Activated T-helper 2 cell treated with anti-CD3 and anti-CD28 coated beads, Interferon-gamma antibody, Interleukin-2, Interleukin-4, amounts not matched to agents 10 μg/mL and 5 μg/mL and 100 μg/mL, durations not matched to agents 14 hours and 24 hours and 36 hours (primary cell): ENCODE measurements at regions of chr1 and their contacts with region 1.

Region 1: DNA sequence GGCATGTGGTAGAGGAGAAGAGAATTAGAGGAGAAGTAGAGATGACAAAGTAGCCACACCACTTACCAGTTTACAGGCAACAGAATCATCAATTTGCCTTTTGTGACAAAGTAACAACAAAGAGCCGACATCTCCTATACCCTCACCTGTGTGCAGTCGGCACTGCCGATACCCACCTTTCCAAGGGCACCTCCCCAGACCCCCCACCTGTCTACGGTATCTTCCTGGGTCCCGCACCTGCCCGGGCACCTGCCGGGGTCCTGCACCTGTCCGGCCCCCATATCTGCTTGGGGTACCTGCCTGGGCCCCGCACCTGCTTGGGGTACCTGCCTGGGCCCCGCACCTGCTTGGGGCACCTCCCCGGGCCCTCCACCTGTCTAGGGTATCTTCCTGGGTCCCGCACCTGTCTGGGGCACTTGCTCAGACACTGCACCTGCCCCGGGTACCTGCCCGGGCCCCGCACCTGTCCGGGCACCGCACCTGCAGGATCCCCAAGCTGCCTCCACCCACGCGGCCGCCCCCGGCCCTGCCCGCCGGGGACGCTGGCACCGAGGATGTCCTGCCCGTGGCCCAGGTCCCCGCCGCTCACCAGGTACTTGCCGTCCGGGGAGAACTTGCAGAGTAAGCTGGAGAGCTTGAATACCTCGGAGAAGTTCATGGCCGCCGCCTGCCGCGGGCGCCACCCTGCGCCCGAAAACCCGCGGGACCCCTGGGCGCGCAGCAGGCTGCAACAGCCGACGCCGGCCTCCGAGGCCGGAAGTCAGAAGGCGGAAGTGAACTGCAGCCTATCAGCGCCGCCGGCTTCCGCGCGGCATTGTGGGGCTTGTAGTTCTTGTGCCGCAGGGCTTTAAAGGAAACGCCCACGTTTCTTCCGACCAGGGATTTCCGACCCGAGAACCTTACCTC is at the start of gene WRAP73:
- DNase-seq: peak; percentile 84
- H3K4me3 Mint-ChIP-seq: peak within 1 kb of the TSS; percentile 80
- H3K27ac Mint-ChIP-seq: no peak within 1 kb of the TSS
- H3K4me1 Mint-ChIP-seq: peaks cover 20% of the 10 kb centered on the region
- H3K27me3 Mint-ChIP-seq: peaks cover 23% of the 10 kb centered on the region
- total RNA-seq, gene WRAP73: 38.7 and 42.2 TPM in 2 replicates

Region 2: GRCh38 chr1:3627515-3628253 is 21.9 kb before region 1 on chr1:
- intact Hi-C with region 1: loop called (anchors 2 kb)
- DNase-seq: no peak
- H3K4me3 Mint-ChIP-seq: no peak overlapping the region
- H3K27ac Mint-ChIP-seq: no peak overlapping the region
- H3K4me1 Mint-ChIP-seq: peaks cover 10% of the 10 kb centered on the region
- H3K27me3 Mint-ChIP-seq: no peaks in the 10 kb centered on the region

Region 3: DNA sequence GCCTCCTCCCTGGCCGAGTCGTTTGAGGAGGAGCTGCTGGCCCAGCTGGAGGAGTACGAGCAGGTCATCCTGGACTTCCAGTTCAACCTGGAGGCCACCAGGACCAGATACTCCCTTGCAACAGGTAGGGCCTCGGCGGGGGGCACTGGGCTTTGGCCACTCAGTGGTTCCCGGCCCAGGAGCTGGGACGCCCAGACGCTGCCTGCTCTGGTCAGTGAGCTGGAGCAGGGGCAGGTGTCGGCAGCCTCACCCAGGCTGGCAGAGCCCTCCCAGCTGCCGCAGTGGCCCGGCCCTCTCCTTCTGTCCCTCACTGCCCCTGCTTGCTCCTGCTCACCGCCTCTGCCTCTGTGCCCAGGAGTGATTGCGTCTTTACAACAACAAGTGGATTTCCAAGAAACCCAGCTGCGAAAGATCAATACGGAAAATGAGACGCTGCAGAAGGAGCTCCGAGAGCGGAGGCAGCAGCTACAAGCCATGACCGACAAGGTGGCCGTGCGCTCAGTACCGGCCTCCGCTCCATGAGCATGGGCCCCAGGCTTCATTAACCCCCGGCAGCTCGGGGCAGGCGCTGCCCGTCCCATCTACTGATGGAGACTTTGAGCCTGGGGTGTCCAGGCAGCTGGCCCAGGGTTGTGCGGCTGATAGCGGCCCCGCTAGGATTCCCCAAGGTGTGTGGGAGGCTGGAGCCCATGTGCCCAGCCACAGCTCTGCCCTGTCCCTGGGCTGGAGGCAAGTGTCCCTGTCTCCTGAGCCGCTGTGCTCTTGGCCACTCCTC is 113.9 kb after region 1 on chr1:
- intact Hi-C with region 1: no loop called
- DNase-seq: no peak
- H3K4me3 Mint-ChIP-seq: no peak overlapping the region
- H3K27ac Mint-ChIP-seq: no peak overlapping the region
- H3K4me1 Mint-ChIP-seq: no peaks in the 10 kb centered on the region
- H3K27me3 Mint-ChIP-seq: peaks cover 3% of the 10 kb centered on the region

Region 4: DNA sequence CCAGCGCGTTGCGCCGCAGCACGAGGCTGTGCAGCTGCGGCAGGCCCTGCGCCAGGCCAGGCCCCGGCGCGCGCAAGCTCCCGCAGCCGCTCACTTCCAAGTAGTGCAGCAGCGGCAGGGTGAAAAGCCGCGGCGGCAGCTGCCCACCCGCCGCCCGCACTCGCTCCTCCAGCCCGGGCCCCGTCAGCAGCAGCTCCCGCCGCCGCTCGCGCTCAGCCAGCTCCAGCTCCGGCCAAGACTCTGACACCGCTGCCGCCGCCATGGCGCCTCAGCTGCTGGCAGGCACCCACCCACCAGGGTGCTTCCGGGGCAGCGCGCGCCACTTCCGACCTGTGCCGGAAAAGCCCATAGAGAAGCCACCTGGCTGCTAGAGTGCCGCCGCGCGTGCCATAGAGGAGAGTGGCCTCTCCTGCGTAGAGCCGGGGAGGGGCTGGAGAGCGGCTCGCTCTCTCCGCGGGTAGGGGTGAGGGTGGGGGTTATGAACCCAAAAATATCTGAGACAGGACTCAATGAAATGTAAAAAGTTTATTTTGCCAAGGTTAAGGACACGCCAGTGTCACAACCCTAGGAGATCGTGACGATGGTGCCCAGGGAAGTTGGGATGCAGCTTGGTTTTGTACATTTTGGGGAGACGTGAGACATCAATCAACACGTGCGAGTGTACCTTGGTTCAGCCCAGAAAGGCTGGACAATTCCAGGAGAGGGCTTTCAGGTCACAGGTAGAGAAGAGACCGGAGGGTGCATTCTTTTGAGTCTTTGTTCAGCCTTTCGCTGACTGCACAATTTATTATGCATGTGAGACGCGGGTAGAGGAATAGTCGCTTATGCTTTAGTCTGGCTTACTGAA is 146.8 kb after region 1 on chr1 and contains the start of gene LRRC47:
- intact Hi-C with region 1: loop called (anchors 10 kb)
- DNase-seq: peak; percentile 92
- H3K4me3 Mint-ChIP-seq: peak within 1 kb of the TSS; percentile 94
- H3K27ac Mint-ChIP-seq: peak within 1 kb of the TSS; percentile 78
- H3K4me1 Mint-ChIP-seq: peaks cover 26% of the 10 kb centered on the region
- H3K27me3 Mint-ChIP-seq: no peaks in the 10 kb centered on the region
- total RNA-seq, gene LRRC47: 40.4 and 41.3 TPM in 2 replicates

Region 5: GRCh38 chr1:3856908-3857790 is 207.6 kb after region 1 on chr1 and contains the starts of genes CEP104 and DFFB:
- intact Hi-C with region 1: loop called (anchors 5 kb)
- DNase-seq: peak; percentile 95
- H3K4me3 Mint-ChIP-seq: peak within 1 kb of the TSS; percentile 97
- H3K27ac Mint-ChIP-seq: peak within 1 kb of the TSS; percentile 81
- H3K4me1 Mint-ChIP-seq: peaks cover 16% of the 10 kb centered on the region
- H3K27me3 Mint-ChIP-seq: no peaks in the 10 kb centered on the region
- total RNA-seq, gene CEP104: 35.4 and 49.9 TPM in 2 replicates
- total RNA-seq, gene DFFB: 15.2 and 17.3 TPM in 2 replicates